CD4-positive, alpha-beta T cell (primary cell): ENCODE measurements at regions of chr1 and their contacts with region 1.

Region 1: GRCh38 chr1:205977402-205978014 is 25.7 kb downstream of the RAB7B start:
- DNase-seq: peak; percentile 62 to 88 (median 72)
- ATAC-seq: peak; percentile 80
- H3K4me3 ChIP-seq: no peak overlapping the region
- H3K4me3 Mint-ChIP-seq: no peak overlapping the region
- H3K27ac ChIP-seq: no peak overlapping the region
- H3K27ac Mint-ChIP-seq: no peak overlapping the region
- H3K4me1 ChIP-seq: no peaks in the 10 kb centered on the region
- H3K4me1 Mint-ChIP-seq: no peaks in the 10 kb centered on the region
- H3K27me3 ChIP-seq: no peaks in the 10 kb centered on the region
- H3K27me3 Mint-ChIP-seq: peaks cover 4% of the 10 kb centered on the region
- CTCF ChIP-seq: peak; percentile 89

Region 2: DNA sequence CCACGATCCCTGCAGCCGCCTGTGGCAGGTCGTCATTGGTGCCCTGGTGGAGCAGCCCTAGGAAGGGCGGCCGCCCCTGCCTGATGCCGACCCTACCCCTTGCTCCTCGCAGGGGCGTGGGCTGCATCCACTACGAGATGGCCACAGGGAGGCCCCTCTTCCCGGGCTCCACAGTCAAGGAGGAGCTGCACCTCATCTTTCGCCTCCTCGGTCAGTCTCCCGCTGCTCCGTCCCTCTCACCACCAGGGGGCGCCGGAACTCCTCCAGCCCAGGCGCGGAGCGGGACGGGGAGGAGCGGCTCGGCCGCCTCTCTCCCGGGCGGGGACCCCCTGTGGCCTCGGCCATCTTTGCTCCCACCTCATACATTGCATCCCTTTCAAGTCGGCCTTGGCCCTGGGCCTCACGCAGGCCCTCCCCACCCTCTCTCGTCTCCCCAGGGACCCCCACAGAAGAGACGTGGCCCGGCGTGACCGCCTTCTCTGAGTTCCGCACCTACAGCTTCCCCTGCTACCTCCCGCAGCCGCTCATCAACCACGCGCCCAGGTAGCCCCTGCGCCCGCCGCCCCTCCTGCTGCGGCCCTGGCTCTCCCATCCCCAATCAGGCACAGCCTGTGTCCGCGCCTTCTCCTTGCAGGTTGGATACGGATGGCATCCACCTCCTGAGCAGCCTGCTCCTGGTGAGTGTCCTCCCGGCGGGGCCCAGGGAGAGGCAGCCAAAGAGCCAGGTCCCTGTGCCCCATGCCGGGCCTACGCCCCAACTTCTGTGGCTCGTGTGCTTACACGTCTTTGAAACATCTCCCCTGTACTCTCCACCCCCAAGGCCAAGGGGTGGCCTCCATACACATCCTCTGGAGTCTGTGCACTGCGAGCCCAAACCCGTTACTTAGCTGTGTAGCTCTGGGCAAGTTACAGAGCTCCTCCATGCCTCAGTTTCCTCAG is 448.4 kb before region 1 on chr1:
- CTCF ChIA-PET with region 1: no interaction called
- POLR2A ChIA-PET with region 1: no interaction called
- intact Hi-C with region 1: loop called in 1 of 2 experiments (anchors 5 kb)
- DNase-seq: peak; percentile 62 to 89 (median 80)
- ATAC-seq: peak; percentile 85
- H3K4me3 ChIP-seq: peak overlapping the region; percentile 32
- H3K4me3 Mint-ChIP-seq: no peak overlapping the region
- H3K27ac ChIP-seq: no peak overlapping the region
- H3K27ac Mint-ChIP-seq: no peak overlapping the region
- H3K4me1 ChIP-seq: peaks cover 9% of the 10 kb centered on the region
- H3K4me1 Mint-ChIP-seq: no peaks in the 10 kb centered on the region
- H3K27me3 ChIP-seq: no peaks in the 10 kb centered on the region
- H3K27me3 Mint-ChIP-seq: no peaks in the 10 kb centered on the region
- CTCF ChIP-seq: peak; percentile 85

Region 3: GRCh38 chr1:205604825-205605505 is 372.5 kb before region 1 on chr1:
- CTCF ChIA-PET with region 1: no interaction called
- POLR2A ChIA-PET with region 1: no interaction called
- intact Hi-C with region 1: no loop called
- DNase-seq: no peak
- ATAC-seq: no peak
- H3K4me3 ChIP-seq: no peak overlapping the region
- H3K4me3 Mint-ChIP-seq: no peak overlapping the region
- H3K27ac ChIP-seq: no peak overlapping the region
- H3K27ac Mint-ChIP-seq: peak overlapping the region; percentile 61
- H3K4me1 ChIP-seq: peaks cover 1% of the 10 kb centered on the region
- H3K4me1 Mint-ChIP-seq: peaks cover 36% of the 10 kb centered on the region
- H3K27me3 ChIP-seq: no peaks in the 10 kb centered on the region
- H3K27me3 Mint-ChIP-seq: no peaks in the 10 kb centered on the region
- CTCF ChIP-seq: no peak

Region 4: DNA sequence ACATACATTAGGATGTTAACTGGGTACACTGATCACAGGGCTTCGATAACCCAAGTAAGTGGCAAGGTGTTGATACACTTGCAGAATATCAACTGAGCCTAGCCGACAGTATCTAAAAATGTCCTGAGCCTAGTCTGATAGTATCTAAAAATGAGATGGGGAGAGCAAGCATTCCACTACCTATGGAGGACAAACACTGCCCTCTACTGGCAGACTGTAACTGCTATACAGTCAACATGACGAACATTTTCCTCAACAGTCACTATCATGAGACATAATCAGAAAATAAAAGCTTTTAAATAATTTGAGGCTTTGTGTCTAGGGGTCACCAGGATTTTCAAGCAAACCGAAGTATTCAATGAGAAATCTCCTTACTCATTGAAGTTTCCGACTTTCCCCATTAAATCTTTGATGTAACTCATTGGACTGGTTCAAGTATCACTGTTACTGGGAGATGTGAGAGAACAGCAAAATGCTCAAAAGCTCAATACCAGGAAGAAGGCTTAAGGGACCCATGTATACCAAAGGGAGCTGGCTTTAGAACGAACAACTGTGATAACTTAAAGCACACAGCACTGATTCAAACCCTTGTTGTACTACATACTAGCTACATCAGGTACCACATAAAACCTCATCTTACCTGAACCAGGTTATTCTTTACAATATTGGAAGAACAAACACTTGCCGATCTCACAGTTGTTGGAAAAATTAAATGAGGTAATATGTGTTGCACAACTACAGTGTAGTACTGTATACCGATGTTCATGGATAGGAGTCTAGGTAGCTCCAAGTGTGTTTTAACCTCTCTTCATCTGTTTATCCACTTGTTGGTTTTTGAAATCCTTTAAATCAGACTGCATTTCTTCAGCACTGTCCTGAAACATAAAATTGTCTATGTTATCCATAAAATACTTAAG is 266.1 kb before region 1 on chr1:
- CTCF ChIA-PET with region 1: interaction called, 10 read pairs
- POLR2A ChIA-PET with region 1: no interaction called
- intact Hi-C with region 1: no loop called
- DNase-seq: peak in 12 of 14 experiments; percentile 16 to 87 (median 47)
- ATAC-seq: peak; percentile 95
- H3K4me3 ChIP-seq: no peak overlapping the region
- H3K4me3 Mint-ChIP-seq: no peak overlapping the region
- H3K27ac ChIP-seq: no peak overlapping the region
- H3K27ac Mint-ChIP-seq: peak overlapping the region; percentile 47
- H3K4me1 ChIP-seq: no peaks in the 10 kb centered on the region
- H3K4me1 Mint-ChIP-seq: peaks cover 40% of the 10 kb centered on the region
- H3K27me3 ChIP-seq: no peaks in the 10 kb centered on the region
- H3K27me3 Mint-ChIP-seq: no peaks in the 10 kb centered on the region
- CTCF ChIP-seq: peak; percentile 91

Region 5: DNA sequence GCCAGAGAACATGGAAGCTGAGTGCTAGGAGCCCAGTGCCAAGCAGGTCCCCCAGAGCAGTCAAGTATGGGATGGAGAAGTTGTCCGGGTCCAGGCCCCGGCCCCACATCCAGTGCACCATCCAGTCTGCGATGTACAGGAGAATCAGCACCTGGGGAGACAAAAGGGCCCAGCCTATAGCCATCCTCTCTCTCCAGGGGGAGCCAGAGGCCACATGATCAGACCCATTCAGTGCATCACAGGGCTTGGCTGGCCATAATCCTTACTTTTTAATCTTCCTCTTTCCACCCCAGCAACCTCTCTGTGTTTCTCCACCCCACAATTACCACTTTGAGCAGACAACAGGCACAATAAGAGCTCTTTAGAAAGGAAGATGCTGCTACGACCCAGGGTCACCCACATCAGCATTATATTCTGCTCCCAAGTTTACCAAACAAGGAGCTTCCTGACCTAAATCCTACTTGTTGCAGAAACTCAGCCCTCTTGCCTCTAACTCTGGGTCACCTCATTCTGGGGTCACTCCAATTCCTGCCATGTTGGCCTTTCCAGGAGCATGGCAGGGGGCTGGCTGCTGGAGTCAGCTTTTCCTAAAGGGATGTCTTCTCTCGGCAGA is 185.8 kb before region 1 on chr1:
- CTCF ChIA-PET with region 1: interaction called, 77 read pairs
- POLR2A ChIA-PET with region 1: interaction called, 13 read pairs
- intact Hi-C with region 1: loop called (anchors 1 kb)
- DNase-seq: peak; percentile 44 to 79 (median 57)
- ATAC-seq: peak; percentile 91
- H3K4me3 ChIP-seq: no peak overlapping the region
- H3K4me3 Mint-ChIP-seq: no peak overlapping the region
- H3K27ac ChIP-seq: no peak overlapping the region
- H3K27ac Mint-ChIP-seq: no peak overlapping the region
- H3K4me1 ChIP-seq: no peaks in the 10 kb centered on the region
- H3K4me1 Mint-ChIP-seq: no peaks in the 10 kb centered on the region
- H3K27me3 ChIP-seq: no peaks in the 10 kb centered on the region
- H3K27me3 Mint-ChIP-seq: no peaks in the 10 kb centered on the region
- CTCF ChIP-seq: peak; percentile 82

Region 6: DNA sequence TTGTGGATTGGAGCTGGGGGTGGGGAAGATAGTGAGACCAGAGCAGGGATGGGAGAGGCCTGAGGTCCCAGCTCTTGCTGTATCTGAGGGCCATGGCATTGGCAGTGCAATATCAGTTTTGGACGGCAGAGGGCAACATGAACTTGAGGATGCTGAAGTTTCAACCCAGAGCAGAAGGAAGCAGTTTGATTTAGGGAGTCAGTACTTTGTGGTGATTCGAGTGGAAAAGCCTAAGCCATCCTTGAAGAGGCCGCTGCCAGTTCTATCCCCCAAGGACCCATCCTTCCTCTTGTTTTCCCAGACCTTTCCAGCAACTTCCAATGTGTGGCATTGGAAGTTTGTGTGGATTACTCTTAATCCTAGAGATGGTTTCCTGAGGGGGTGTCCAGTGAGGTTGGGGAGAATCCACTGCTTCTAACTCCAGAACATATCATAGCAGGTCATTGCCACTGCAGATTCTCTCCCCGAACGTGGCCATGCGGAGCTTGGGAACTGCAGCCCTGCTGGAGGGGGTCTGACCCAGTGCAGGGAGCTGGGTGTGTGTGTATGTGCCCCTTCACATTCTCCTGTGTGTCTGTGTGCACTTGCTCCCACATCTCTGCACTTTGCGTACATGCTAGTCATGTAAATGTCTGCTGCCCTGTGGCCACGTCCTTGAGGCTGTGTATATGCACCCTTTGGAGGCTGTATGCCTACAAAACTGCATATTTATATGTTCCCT is 58.3 kb before region 1 on chr1:
- CTCF ChIA-PET with region 1: interaction called, 10 read pairs
- POLR2A ChIA-PET with region 1: no interaction called
- intact Hi-C with region 1: loop called in 1 of 2 experiments (anchors 2 kb)
- DNase-seq: peak; percentile 33 to 79 (median 57)
- ATAC-seq: peak; percentile 57
- H3K4me3 ChIP-seq: no peak overlapping the region
- H3K4me3 Mint-ChIP-seq: no peak overlapping the region
- H3K27ac ChIP-seq: no peak overlapping the region
- H3K27ac Mint-ChIP-seq: no peak overlapping the region
- H3K4me1 ChIP-seq: no peaks in the 10 kb centered on the region
- H3K4me1 Mint-ChIP-seq: no peaks in the 10 kb centered on the region
- H3K27me3 ChIP-seq: no peaks in the 10 kb centered on the region
- H3K27me3 Mint-ChIP-seq: peaks cover under 1% of the 10 kb centered on the region
- CTCF ChIP-seq: peak; percentile 86

Region 7: DNA sequence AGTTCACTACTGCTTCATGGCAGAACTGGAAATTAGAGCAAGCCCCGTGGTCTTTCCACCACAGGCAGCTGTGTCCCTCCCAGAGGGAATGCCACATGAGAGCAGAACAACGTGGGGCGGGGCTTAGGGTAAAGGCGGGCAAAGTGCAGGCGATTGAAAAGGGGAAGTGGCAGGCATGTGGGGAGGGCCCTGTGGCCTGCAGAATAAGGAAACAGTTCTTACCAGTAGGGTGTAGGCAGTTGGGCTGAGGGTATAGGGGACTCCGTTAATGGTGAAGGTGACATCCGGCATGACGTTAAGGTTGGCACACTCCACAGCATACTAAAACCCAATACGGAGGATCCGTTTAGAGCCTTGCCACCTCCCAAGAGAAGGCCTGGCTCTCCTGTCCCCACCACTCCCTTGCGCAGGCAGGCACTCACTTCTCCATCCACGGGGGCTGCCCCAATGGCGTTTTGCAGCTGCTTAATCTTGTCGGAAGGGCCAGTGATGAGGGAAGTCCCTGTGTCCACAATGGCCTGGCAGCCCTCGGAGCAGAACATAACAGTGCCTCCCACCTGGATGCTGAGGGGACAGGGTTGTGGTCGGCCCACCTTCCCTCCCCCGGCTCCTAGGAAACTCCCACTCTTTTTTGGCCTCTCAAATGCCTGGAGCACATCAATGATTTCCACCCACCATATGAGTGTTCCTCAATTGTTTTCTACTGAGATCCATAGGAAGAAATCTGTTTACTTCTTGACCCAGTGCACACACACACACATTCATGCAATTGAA is 34.8 kb after region 1 on chr1:
- CTCF ChIA-PET with region 1: no interaction called
- POLR2A ChIA-PET with region 1: no interaction called
- intact Hi-C with region 1: no loop called
- DNase-seq: peak in 9 of 14 experiments; percentile 4 to 71 (median 29)
- ATAC-seq: peak; percentile 95
- H3K4me3 ChIP-seq: no peak overlapping the region
- H3K4me3 Mint-ChIP-seq: peak overlapping the region; percentile 44
- H3K27ac ChIP-seq: no peak overlapping the region
- H3K27ac Mint-ChIP-seq: no peak overlapping the region
- H3K4me1 ChIP-seq: peaks cover 8% of the 10 kb centered on the region
- H3K4me1 Mint-ChIP-seq: peaks cover 24% of the 10 kb centered on the region
- H3K27me3 ChIP-seq: no peaks in the 10 kb centered on the region
- H3K27me3 Mint-ChIP-seq: no peaks in the 10 kb centered on the region
- CTCF ChIP-seq: no peak

Region 8: DNA sequence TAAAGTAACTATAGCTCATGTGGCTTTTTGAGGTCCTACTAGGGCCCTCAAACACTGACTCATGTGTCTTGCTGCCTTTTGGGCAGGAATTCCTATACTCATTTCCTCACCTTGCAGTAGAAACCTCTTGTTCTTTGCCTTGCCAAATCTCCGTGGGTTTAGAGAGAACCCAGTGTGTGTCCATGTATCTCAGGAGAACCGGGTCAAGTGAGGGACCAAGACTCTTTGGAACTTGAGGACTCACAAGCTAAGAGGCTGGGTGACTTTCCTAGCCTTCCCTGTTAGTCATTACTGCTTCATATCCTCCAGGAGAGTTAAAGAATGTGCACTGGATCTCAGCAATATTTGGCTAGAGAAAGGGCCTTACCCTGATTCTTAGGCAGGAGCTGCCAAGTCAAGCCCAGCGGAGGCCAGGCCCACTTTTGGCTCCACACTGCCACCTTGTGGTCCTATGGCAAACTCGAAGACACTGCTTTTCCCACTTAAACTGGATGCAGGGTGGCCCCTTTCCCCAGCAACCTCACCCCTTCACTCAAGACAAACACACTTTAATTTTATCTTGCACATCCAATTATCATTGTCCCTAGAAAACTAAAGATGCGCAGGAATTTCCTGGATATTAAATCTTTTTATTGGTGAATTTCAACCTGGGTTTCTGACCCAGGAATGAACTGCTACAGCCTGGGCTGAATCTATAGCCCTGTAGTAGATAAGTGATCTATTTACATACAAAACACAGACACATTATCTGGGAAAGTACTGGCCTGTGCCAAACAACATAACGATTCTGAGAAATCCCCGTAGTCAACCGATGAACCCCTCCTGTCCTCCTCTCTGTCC is 129.0 kb after region 1 on chr1:
- CTCF ChIA-PET with region 1: no interaction called
- POLR2A ChIA-PET with region 1: no interaction called
- intact Hi-C with region 1: loop called in 1 of 2 experiments (anchors 5 kb)
- DNase-seq: peak; percentile 53 to 86 (median 69)
- ATAC-seq: peak; percentile 73
- H3K4me3 ChIP-seq: no peak overlapping the region
- H3K4me3 Mint-ChIP-seq: no peak overlapping the region
- H3K27ac ChIP-seq: no peak overlapping the region
- H3K27ac Mint-ChIP-seq: no peak overlapping the region
- H3K4me1 ChIP-seq: no peaks in the 10 kb centered on the region
- H3K4me1 Mint-ChIP-seq: no peaks in the 10 kb centered on the region
- H3K27me3 ChIP-seq: peaks cover 0 to 3% of the 10 kb centered on the region in 2 experiments
- H3K27me3 Mint-ChIP-seq: no peaks in the 10 kb centered on the region
- CTCF ChIP-seq: peak; percentile 90